ENCODE measurements at regions of chr14 and their contacts with region 1.

Region 1: GRCh38 chr14:95527387-95528002 is 7.4 kb upstream of the GLRX5 start:
- DNase-seq: peak; percentile 56 to 72 (median 65)
- H3K4me3 ChIP-seq: peak overlapping the region in 1 of 7 experiments; percentile 12
- H3K27ac ChIP-seq: no peak overlapping the region
- H3K4me1 ChIP-seq: peaks cover 17 to 65% (median 43%) of the 10 kb centered on the region in 4 experiments
- H3K27me3 ChIP-seq: no peaks in the 10 kb centered on the region

Region 2: GRCh38 chr14:95442633-95443021 is 84.9 kb before region 1 on chr14:
- CTCF ChIA-PET with region 1: interaction called, 259 read pairs
- POLR2A ChIA-PET with region 1: no interaction called
- DNase-seq: peak; percentile 64 to 82 (median 76)
- H3K4me3 ChIP-seq: no peak overlapping the region
- H3K27ac ChIP-seq: no peak overlapping the region
- H3K4me1 ChIP-seq: no peaks in the 10 kb centered on the region
- H3K27me3 ChIP-seq: no peaks in the 10 kb centered on the region

Region 3: GRCh38 chr14:95495538-95496025 is 31.9 kb before region 1 on chr14:
- CTCF ChIA-PET with region 1: interaction called, 17 read pairs
- POLR2A ChIA-PET with region 1: interaction called, 3 read pairs
- DNase-seq: peak; percentile 62 to 87 (median 74)
- H3K4me3 ChIP-seq: peak overlapping the region in 2 of 7 experiments; percentile 13 to 21
- H3K27ac ChIP-seq: peak overlapping the region in 1 of 2 experiments; percentile 68
- H3K4me1 ChIP-seq: peaks cover 7 to 36% (median 31%) of the 10 kb centered on the region in 4 experiments
- H3K27me3 ChIP-seq: no peaks in the 10 kb centered on the region

Region 4: DNA sequence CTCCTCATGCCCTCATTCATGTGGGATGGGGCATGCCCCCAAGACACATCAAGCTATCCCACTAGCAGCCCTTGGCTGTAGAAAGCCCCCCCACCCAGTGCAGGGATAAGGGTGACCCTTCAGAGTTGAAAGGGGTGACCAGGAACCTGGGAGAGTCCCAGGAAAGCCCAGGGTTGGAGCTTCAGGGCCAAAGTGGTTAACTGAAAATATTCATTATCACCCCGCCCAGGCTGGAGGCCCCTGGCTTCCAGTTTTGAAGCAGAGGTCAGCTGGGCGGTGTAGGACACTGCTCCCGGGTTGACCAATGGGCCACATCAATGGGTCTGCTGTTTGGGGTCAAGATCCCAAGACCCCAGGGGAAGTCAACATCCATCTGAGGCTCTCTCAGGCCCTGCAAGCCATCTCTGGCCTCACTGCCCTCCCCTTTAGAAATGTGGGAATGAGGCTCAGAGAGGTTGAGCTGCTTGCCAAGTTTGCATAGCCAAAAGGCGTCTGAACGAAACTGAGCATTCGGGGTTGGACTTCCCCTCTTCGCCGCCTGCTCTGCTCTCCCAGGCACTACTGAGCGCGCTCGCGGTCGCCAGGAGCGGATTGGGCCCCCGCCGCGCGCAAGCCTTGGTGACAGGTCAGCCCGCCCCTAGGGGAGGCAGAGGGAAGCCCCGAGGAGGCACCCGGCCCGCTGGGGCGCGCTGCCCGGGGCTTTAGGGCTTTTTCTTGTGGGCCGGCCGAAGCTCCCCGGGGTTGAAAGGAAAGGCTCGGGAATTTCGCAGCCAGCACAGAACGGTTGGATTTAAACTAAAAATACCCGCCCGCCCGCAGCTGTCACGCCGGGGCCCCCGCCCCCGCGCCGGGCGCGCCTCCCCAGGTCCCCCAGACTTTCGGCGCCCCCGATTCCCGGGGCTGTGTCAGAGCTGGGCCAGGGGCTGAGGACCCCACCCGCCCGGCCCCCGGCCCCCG is 11.6 kb before region 1 on chr14:
- CTCF ChIA-PET with region 1: interaction called, 44 read pairs
- POLR2A ChIA-PET with region 1: no interaction called
- DNase-seq: peak; percentile 87 to 95 (median 92)
- H3K4me3 ChIP-seq: peak overlapping the region in 6 of 7 experiments; percentile 40 to 80 (median 68)
- H3K27ac ChIP-seq: peak overlapping the region in 1 of 2 experiments; percentile 34
- H3K4me1 ChIP-seq: peaks cover 24 to 73% (median 68%) of the 10 kb centered on the region in 4 experiments
- H3K27me3 ChIP-seq: no peaks in the 10 kb centered on the region

Region 5: GRCh38 chr14:95545179-95546168 is 18.0 kb after region 1 on chr14:
- CTCF ChIA-PET with region 1: no interaction called
- POLR2A ChIA-PET with region 1: no interaction called
- DNase-seq: no peak
- H3K4me3 ChIP-seq: no peak overlapping the region
- H3K27ac ChIP-seq: no peak overlapping the region
- H3K4me1 ChIP-seq: peaks cover 0 to 3% (median 0%) of the 10 kb centered on the region in 4 experiments
- H3K27me3 ChIP-seq: no peaks in the 10 kb centered on the region